Endothelial cell of umbilical vein (primary cell): ENCODE measurements at regions of chr10 and their contacts with region 1.

Region 1: DNA sequence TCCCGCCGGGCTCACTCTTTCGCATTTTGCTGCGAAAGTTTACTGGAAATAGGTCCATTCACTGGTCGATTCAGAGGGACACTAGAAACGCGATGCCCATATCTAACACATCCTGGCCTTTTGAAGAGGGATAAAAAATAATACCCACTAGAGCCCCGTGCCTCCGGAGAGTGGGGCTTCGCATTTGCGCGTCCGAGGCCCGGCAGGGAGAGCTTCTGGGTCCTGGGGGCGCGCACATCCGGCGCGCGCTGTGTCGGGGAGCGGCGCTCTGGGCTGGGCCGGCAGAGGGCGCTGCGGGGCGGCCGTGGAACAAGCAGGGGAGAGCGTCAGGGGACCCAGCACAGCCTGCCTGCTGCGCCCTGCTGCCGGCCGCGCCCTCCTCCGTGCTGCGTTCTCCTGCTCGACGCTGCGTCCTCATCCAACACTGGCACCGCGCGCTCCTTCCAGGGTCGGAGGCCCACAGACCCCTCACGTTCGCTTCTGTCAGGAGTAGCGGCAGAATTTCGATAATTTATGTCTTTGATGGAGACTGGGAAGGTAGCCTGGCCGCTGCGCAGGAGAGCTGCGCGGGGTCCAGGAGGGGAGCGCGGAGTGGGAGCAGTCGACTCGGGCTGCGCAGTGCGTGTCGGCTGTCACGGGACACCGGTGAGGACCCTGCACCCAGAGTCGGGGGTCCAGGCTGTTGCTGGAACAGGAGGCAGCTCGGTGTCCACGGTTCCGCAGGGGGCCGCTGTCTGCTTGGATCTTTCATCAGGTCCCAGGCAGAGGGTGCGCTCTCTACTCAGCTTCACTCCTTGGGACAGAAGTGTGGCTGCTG is 41.5 kb upstream of the ZNF32 start:
- DNase-seq: peak; percentile 74
- H3K4me3 ChIP-seq: peak overlapping the region in 2 of 3 experiments; percentile 22 to 35
- H3K27ac ChIP-seq: peak overlapping the region; percentile 7
- H3K4me1 ChIP-seq: peaks cover 31% of the 10 kb centered on the region
- H3K27me3 ChIP-seq: no peaks in the 10 kb centered on the region
- CTCF ChIP-seq: peak; percentile 90 to 91
- POLR2A ChIP-seq: no peak

Region 2: DNA sequence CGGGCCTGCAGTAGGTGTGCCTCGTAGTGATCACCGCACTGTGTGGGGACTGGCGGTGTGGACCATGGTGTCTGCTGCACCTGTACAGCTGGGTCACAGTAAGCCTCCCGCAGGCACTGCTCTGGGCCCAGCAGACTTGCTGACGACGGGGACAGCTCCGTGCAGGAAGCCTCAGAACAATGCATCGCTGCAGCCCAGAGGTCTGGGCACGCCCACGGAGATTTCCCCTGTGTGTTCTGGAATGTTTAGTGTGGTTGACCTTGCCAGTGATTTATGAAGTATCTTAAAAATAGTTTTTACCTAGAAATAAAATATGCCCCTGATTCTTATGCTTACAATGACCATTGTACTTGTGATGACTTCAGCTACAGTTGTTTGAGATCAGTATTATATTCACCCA is 17.6 kb after region 1 on chr10:
- CTCF ChIA-PET with region 1: interaction called, 3 read pairs
- POLR2A ChIA-PET with region 1: no interaction called
- dilution Hi-C with region 1: no loop called
- intact Hi-C with region 1: loop called (anchors 1 kb)
- DNase-seq: peak; percentile 58
- H3K4me3 ChIP-seq: no peak overlapping the region
- H3K27ac ChIP-seq: peak overlapping the region; percentile 37
- H3K4me1 ChIP-seq: peaks cover 9% of the 10 kb centered on the region
- H3K27me3 ChIP-seq: no peaks in the 10 kb centered on the region
- CTCF ChIP-seq: no peak
- POLR2A ChIP-seq: no peak

Region 3: DNA sequence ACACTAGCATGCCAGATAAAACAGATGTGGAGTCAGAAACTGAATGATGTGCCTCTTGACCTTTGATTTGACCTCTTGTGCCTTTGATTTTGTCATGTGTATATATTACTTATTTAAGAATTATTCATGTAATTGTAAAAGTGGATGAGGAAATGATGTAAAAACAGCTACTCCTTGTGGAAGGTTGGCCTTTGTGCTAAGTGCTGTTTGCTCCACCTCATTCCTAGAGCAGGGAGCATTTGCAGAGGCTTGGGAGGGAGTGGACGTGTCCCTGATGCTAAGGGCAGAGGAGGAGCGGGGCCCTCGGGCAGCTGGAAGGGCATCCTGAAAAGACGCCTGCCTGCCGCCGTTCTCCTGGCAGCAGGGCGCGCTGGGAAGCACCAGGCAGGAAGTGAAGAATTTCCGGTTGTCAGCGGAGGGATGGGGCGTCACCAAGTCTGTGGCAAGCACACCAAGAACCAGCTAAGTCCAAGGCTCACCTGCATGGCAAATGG is 156.1 kb after region 1 on chr10:
- CTCF ChIA-PET with region 1: interaction called, 14 read pairs
- POLR2A ChIA-PET with region 1: no interaction called
- dilution Hi-C with region 1: no loop called
- intact Hi-C with region 1: no loop called
- DNase-seq: peak; percentile 73
- H3K4me3 ChIP-seq: no peak overlapping the region
- H3K27ac ChIP-seq: peak overlapping the region; percentile 65
- H3K4me1 ChIP-seq: peaks cover 17% of the 10 kb centered on the region
- H3K27me3 ChIP-seq: no peaks in the 10 kb centered on the region
- CTCF ChIP-seq: no peak
- POLR2A ChIP-seq: no peak

Region 4: DNA sequence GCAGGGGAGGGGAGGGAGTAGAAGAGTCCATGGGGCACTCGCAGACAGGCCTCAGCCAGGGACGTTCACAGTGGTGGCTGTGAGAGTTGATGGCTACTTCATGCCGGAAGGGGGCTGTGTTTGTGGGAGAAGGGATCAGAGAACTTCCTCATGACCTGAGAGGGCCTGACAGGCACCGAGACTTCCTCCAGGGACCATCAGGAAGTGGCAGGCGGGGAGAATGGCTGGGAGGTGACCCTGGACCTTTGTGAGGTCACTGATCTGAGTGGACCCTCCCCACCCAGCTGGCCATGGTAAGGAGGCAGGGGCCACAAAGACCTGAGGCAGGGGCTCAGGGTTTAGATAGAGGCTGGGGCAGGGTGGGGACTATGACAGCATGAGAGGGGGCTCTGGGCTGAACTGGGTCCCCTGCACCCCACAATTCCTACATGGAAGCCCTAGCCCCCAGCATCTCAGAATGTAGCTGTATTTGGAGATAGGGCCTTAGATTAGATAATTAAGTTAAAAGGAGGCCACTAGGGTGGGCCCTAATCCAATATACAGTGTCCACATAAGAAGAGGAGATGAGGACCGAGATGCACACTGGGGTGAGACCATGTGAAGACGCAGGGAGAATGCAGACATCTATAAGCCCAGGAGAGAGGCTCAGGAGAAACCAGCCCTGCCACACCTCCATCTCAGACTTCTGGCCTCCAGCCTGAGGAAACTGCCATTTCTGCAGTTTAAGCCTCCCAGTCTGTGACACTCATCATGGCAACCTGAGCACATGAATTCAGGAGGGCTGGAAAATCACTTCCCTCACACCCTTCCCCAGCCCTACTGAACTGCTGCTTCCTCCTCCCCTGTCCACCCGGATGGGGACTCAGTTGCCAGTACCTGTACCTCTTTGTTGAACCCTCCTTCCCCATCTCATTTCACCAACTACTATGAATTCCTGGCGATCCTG is 232.4 kb after region 1 on chr10:
- CTCF ChIA-PET with region 1: no interaction called
- POLR2A ChIA-PET with region 1: no interaction called
- dilution Hi-C with region 1: no loop called
- intact Hi-C with region 1: no loop called
- DNase-seq: no peak
- H3K4me3 ChIP-seq: no peak overlapping the region
- H3K27ac ChIP-seq: no peak overlapping the region
- H3K4me1 ChIP-seq: no peaks in the 10 kb centered on the region
- H3K27me3 ChIP-seq: peaks cover 0 to 3% of the 10 kb centered on the region in 2 experiments
- CTCF ChIP-seq: no peak
- POLR2A ChIP-seq: no peak

Region 5: DNA sequence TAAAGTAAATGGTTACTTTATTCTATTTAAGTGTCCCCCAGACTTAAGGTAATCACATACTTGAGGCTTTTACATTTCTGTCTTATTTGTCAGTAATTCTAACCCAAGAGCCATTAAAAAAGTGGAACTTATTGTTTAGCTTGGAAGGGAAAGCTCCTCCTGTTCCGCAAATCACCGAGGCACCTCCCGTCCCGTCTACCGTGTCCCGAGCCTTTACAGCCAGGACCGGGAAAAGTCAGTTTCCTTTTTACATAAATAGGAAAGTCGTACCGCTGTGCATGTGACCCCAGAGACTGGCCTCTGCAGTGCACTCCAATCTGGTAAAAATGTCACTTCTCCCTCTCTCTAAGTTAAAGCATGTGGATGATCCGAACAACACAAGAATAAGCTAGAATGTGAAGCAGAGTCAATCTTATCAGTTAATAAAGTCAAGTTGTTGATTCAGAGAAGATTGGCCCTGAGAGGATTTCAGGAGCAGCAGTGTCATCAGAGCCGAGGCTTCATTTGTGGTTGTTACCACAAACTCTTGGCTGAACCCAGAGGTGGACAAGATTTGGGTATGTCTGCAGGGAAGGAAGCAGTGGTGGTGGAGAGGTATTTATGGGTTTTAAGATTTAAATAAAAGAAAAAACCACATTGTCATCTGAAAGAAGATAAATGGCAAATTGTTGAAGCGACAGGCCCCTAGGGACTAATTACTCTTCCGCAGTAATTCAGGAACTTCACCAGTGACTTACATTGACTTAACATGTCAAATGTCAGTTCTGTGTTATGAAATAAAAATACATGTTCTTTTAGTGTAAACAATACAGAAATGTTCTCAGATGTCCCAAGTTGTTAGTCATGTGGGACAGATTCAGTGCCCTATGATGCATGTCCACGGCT is 275.1 kb after region 1 on chr10:
- CTCF ChIA-PET with region 1: interaction called, 3 read pairs
- POLR2A ChIA-PET with region 1: no interaction called
- dilution Hi-C with region 1: no loop called
- intact Hi-C with region 1: loop called (anchors 1 kb)
- DNase-seq: peak; percentile 46
- H3K4me3 ChIP-seq: no peak overlapping the region
- H3K27ac ChIP-seq: no peak overlapping the region
- H3K4me1 ChIP-seq: peaks cover 6% of the 10 kb centered on the region
- H3K27me3 ChIP-seq: no peaks in the 10 kb centered on the region
- CTCF ChIP-seq: no peak
- POLR2A ChIP-seq: no peak

Region 6: DNA sequence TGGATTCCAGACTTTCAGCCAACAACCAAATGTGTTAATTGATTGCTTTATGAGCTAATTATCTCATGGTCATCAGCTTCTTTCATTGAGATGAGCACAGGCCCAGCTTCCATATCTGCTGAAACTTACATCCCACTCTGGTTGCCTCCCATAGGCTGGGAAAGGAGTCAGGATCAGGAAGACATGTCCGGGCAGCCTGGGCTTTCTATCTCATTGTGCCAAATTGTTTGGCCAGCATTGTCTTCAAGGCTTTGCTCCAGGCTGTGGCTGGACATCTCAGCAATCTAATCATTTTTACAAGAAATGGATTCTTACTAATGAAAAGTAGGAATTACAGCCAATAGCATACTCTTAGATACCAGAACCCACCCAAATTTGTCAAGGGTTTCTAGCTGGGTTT is 399.5 kb after region 1 on chr10:
- CTCF ChIA-PET with region 1: no interaction called
- POLR2A ChIA-PET with region 1: no interaction called
- dilution Hi-C with region 1: no loop called
- intact Hi-C with region 1: no loop called
- DNase-seq: no peak
- H3K4me3 ChIP-seq: no peak overlapping the region
- H3K27ac ChIP-seq: no peak overlapping the region
- H3K4me1 ChIP-seq: no peaks in the 10 kb centered on the region
- H3K27me3 ChIP-seq: no peaks in the 10 kb centered on the region
- CTCF ChIP-seq: no peak
- POLR2A ChIP-seq: no peak

Region 7: GRCh38 chr10:44310762-44311562 is 620.8 kb after region 1 on chr10:
- CTCF ChIA-PET with region 1: interaction called, 18 read pairs
- POLR2A ChIA-PET with region 1: no interaction called
- dilution Hi-C with region 1: no loop called
- intact Hi-C with region 1: loop called (anchors 1 kb)
- DNase-seq: peak; percentile 53
- H3K4me3 ChIP-seq: no peak overlapping the region
- H3K27ac ChIP-seq: no peak overlapping the region
- H3K4me1 ChIP-seq: no peaks in the 10 kb centered on the region
- H3K27me3 ChIP-seq: no peaks in the 10 kb centered on the region
- CTCF ChIP-seq: peak; percentile 85 to 87
- POLR2A ChIP-seq: no peak